Left ventricle myocardium superior (tissue), 1 donor: ENCODE measurements at regions of chr6 and their contacts with region 1.

Region 1: DNA sequence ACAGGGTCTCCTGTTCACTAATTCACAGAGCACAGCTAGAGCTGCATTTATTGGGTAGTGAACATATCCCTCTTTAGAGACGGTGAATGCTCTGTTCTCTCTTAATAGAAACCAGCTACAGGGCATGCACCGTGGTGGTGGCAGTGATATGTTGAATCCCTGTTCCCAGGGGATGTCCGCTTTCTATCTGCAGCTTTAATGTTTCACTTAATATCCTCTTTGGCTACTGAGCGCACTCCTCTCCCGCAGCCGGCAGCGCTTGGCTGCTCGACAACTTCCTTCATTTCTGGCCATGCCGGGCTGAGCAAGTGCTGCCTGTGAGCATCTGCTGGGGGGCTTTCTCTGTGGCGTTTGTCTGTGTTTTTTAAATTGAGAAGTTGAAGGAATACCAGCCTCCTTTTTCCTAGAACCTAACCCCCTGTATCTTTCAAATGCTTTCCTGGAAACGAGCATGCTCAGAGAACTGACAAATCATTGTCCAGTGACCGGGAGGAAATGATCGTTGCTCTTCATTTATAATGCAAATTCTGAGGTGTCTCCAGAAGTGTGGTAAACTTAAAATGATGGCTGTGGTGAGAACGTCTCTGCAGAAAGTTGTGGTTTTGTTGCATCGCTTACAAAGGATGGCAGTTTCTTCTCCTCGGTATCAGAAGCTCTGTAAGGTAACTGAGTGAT is 297.9 kb downstream of the UTRN start:
- DNase-seq: peak; percentile 63
- ATAC-seq: peak; percentile 85

Region 2: DNA sequence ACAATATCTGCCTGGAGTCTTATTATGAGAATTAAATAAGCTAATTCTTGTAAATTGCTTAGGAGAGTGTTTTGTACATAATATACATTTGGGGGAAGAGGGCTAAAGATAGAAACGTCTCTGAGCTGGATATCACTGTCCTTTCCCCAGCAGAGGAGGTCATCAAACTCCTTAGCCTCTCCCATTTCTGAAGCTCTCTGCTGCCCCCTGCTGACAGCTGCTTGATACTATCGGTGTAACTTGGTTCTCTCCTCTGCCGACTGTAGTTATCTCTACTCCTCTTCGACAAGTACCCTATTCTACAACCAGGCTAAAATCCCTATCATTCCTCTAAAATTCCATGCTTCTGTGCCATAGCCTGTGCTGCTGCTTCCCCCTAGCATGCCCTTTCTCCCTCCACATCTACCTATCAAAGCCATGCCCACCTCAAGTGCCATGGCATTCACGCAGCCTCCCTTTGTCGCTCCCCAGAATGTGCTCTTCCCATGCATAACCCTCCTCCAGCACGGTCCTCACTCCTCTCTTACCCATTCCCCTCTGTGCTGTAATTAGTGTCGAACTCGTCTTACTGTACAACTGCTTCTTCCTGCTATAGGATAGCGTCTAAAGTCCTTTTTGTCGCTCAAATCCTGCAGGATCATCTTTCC is 1051.0 kb after region 1 on chr6:
- intact Hi-C with region 1: loop called (anchors 10 kb)
- DNase-seq: peak; percentile 84
- ATAC-seq: peak; percentile 95